ENCODE measurements at regions of chr18 and their contacts with region 1.

Region 1: GRCh38 chr18:8516371-8517250 is 92.6 kb upstream of the RAB12 start:
- DNase-seq: no peak
- H3K4me3 ChIP-seq: no peak overlapping the region
- H3K4me1 ChIP-seq: no peaks in the 10 kb centered on the region
- H3K27me3 ChIP-seq: no peaks in the 10 kb centered on the region

Region 2: GRCh38 chr18:8366656-8367055 is 150.0 kb before region 1 on chr18:
- in situ Hi-C with region 1: no loop called
- DNase-seq: no peak
- H3K4me3 ChIP-seq: no peak overlapping the region
- H3K4me1 ChIP-seq: no peaks in the 10 kb centered on the region
- H3K27me3 ChIP-seq: peaks cover 9% of the 10 kb centered on the region

Region 3: DNA sequence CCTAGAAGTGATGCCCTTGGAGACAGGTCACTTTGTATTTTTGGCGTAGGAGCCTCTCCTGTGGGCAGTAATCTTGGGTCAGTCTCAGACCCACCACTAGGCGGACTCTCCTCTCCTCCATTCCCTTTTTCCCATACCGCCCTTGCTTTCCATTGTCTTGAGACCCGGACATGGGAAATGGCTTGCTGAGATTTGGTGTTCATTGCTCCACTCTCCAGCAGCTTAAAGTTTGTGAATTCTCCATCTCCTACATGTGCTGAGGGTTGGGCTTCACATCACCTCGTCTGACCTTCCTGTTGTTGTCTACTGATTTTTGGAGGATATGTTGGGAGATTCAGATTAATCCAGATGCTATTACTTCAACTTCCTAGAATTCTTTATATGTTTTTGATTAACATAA is 66.6 kb before region 1 on chr18:
- in situ Hi-C with region 1: loop called (anchors 10 kb)
- DNase-seq: peak; percentile 30 to 70
- H3K4me3 ChIP-seq: no peak overlapping the region
- H3K4me1 ChIP-seq: no peaks in the 10 kb centered on the region
- H3K27me3 ChIP-seq: no peaks in the 10 kb centered on the region; the same call in 1 of the 2 replicates

Measured in HAP-1 (cell line).